ENCODE measurements at regions of chr2 and their contacts with region 1.

Region 1: DNA sequence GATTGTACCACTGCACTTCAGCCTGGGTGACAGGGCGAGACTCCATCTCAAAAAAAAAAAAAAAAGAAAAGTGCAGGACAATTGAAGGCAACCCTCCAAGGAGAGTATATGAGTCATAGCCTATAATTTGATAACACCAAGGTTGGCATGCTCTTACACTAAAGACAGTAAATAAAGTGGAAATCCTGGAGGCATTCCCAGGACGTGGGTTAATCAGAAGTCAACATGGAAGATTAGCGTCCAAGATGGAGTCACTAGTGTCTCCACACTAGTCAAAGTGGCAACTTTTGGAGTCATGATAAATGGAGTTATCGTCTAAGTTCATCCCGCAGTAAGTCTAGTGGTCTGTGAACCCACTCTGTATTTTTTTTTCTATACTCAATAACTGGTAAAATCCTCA is 21.2 kb upstream of the UGGT1 start:
- DNase-seq: no peak
- ATAC-seq: no peak
- H3K4me3 ChIP-seq: no peak overlapping the region
- H3K27ac ChIP-seq: no peak overlapping the region
- H3K4me1 ChIP-seq: no peaks in the 10 kb centered on the region
- H3K27me3 ChIP-seq: no peaks in the 10 kb centered on the region
- CTCF ChIP-seq: no peak
- POLR2A ChIP-seq: no peak
- RAD21 ChIP-seq: no peak

Region 2: GRCh38 chr2:127615501-127616166 is 454.1 kb before region 1 on chr2:
- CTCF ChIA-PET with region 1: no interaction called
- POLR2A ChIA-PET with region 1: no interaction called
- RAD21 ChIA-PET with region 1: no interaction called
- intact Hi-C with region 1: no loop called
- DNase-seq: no peak
- ATAC-seq: no peak
- H3K4me3 ChIP-seq: no peak overlapping the region
- H3K27ac ChIP-seq: no peak overlapping the region
- H3K4me1 ChIP-seq: no peaks in the 10 kb centered on the region; a peak in 1 of 4 replicates
- H3K27me3 ChIP-seq: no peaks in the 10 kb centered on the region
- CTCF ChIP-seq: no peak
- POLR2A ChIP-seq: no peak
- RAD21 ChIP-seq: no peak

Region 3: GRCh38 chr2:128321784-128322714 is 252.3 kb after region 1 on chr2:
- CTCF ChIA-PET with region 1: no interaction called
- POLR2A ChIA-PET with region 1: no interaction called
- RAD21 ChIA-PET with region 1: no interaction called
- intact Hi-C with region 1: loop called (anchors 10 kb)
- DNase-seq: peak; percentile 51
- ATAC-seq: peak; percentile 67
- H3K4me3 ChIP-seq: peak overlapping the region; percentile 58 to 63
- H3K27ac ChIP-seq: peak overlapping the region; percentile 89
- H3K4me1 ChIP-seq: peaks cover 1 to 21% of the 10 kb centered on the region in 2 experiments; a peak in 3 of 4 replicates
- H3K27me3 ChIP-seq: no peaks in the 10 kb centered on the region
- CTCF ChIP-seq: peak; percentile 31 to 82 (median 75); a peak in 5 of 6 replicates
- POLR2A ChIP-seq: no peak
- RAD21 ChIP-seq: peak; percentile 61

Region 4: GRCh38 chr2:128754246-128754724 is 684.5 kb after region 1 on chr2:
- CTCF ChIA-PET with region 1: no interaction called
- POLR2A ChIA-PET with region 1: no interaction called
- RAD21 ChIA-PET with region 1: no interaction called
- intact Hi-C with region 1: loop called (anchors 10 kb)
- DNase-seq: no peak
- ATAC-seq: no peak
- H3K4me3 ChIP-seq: no peak overlapping the region
- H3K27ac ChIP-seq: no peak overlapping the region
- H3K4me1 ChIP-seq: no peaks in the 10 kb centered on the region
- H3K27me3 ChIP-seq: peaks cover 9% of the 10 kb centered on the region; the same call in 1 of the 2 replicates
- CTCF ChIP-seq: no peak
- POLR2A ChIP-seq: no peak
- RAD21 ChIP-seq: no peak